B cell (primary cell): ENCODE measurements at regions of chr1 and their contacts with region 1.

Region 1: GRCh38 chr1:207321079-207321789 is at the start of gene CD55:
- DNase-seq: peak; percentile 100
- ATAC-seq: peak; percentile 86
- H3K4me3 ChIP-seq: peak within 1 kb of the TSS; percentile 83 to 100 (median 91)
- H3K4me3 Mint-ChIP-seq: peak within 1 kb of the TSS; percentile 98
- H3K27ac ChIP-seq: peak within 1 kb of the TSS; percentile 98
- H3K27ac Mint-ChIP-seq: peak within 1 kb of the TSS; percentile 100
- H3K4me1 ChIP-seq: peaks cover 38 to 43% of the 10 kb centered on the region in 2 donors
- H3K4me1 Mint-ChIP-seq: peaks cover 56% of the 10 kb centered on the region
- H3K27me3 ChIP-seq: no peaks in the 10 kb centered on the region
- H3K27me3 Mint-ChIP-seq: no peaks in the 10 kb centered on the region
- CTCF ChIP-seq: peak; percentile 43
- total RNA-seq, gene CD55: 239 and 252 TPM in 2 replicates

Region 2: DNA sequence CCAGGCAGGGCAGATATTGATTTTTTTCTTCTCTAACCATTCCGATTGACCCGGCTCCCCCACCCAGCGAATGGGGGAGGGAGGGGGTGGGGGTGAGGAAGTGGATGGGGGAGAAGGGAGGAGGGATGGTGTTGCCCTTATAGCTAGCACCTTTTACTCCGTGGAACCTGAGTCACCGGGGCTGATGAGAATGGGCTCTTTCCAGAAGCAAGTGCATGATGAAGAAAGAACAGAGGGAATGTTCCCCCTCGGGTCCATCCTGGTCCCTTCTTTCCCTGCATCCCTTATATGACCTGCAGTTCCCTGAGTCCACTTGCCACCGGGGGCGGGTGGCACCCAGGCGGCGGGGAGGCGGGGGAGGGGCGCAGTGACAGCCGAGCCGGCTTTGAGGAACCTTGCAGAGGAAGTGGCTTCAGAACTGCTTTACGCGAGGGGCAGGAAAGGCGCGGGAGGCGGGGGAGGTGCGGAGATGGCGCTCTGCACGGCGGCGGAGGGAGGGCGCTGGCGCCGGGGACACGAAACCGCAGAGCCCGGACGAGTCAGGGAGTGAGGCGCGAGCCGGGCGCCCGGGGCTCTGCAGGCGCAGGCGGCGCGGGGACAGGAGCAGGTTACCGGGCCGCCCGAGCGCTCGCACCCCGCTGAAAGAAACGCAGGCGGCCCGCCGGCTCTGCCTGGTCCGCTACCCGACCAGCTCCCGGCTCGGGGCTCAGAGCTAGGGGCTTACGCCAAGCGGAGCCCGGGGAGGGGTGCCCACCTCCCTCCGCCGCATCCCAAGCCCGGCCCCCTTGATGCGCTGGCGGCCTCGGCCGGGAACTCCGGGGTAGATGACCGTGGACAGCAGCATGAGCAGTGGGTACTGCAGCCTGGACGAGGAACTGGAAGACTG is 764.2 kb before region 1 on chr1:
- CTCF ChIA-PET with region 1: no interaction called
- POLR2A ChIA-PET with region 1: no interaction called
- intact Hi-C with region 1: loop called (anchors 10 kb)
- DNase-seq: peak; percentile 89
- ATAC-seq: peak; percentile 79
- H3K4me3 ChIP-seq: peak overlapping the region; percentile 85 to 100 (median 97)
- H3K4me3 Mint-ChIP-seq: peak overlapping the region; percentile 99
- H3K27ac ChIP-seq: peak overlapping the region; percentile 86 to 95
- H3K27ac Mint-ChIP-seq: peak overlapping the region; percentile 99
- H3K4me1 ChIP-seq: peaks cover 46 to 69% of the 10 kb centered on the region in 2 donors
- H3K4me1 Mint-ChIP-seq: peaks cover 67% of the 10 kb centered on the region
- H3K27me3 ChIP-seq: no peaks in the 10 kb centered on the region
- H3K27me3 Mint-ChIP-seq: no peaks in the 10 kb centered on the region
- CTCF ChIP-seq: no peak

Region 3: DNA sequence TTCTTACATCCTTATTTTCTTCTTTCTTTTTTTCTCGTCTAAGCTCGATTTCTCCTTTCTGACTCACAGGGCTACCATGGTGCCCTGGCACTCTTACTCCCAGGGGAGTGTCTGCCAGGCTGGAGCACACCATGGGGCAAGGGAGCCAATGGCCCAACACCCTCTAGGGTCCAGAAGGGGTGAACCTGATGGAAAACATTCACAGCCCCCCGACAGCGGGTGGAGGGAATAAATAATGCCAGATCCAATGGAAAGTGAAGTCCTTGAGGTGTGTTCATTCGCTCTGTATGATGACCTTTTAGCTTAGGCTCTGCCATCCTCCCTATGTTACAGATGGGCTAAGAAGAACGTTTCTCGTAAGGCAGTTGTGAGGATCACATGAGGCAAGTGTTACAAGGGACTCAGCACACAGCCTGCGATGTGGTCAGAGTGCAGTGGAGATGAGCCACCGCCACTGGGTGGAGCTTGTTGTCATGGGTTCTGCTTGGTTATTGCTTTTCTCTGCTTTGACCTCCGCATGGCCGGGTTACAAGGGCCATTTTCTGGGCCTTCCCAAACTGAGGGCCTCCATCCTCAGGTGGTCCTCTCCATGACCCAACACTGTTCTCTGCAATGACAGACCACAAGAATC is 396.0 kb before region 1 on chr1:
- CTCF ChIA-PET with region 1: no interaction called
- POLR2A ChIA-PET with region 1: interaction called, 3 read pairs
- intact Hi-C with region 1: loop called (anchors 5 kb)
- DNase-seq: peak; percentile 84
- ATAC-seq: peak; percentile 53
- H3K4me3 ChIP-seq: peak overlapping the region in 1 of 5 experiments; percentile 17
- H3K4me3 Mint-ChIP-seq: no peak overlapping the region
- H3K27ac ChIP-seq: peak overlapping the region; percentile 88 to 96
- H3K27ac Mint-ChIP-seq: no peak overlapping the region
- H3K4me1 ChIP-seq: peaks cover 82 to 84% of the 10 kb centered on the region in 2 donors
- H3K4me1 Mint-ChIP-seq: peaks cover 37% of the 10 kb centered on the region
- H3K27me3 ChIP-seq: no peaks in the 10 kb centered on the region
- H3K27me3 Mint-ChIP-seq: no peaks in the 10 kb centered on the region
- CTCF ChIP-seq: peak; percentile 19

Region 4: DNA sequence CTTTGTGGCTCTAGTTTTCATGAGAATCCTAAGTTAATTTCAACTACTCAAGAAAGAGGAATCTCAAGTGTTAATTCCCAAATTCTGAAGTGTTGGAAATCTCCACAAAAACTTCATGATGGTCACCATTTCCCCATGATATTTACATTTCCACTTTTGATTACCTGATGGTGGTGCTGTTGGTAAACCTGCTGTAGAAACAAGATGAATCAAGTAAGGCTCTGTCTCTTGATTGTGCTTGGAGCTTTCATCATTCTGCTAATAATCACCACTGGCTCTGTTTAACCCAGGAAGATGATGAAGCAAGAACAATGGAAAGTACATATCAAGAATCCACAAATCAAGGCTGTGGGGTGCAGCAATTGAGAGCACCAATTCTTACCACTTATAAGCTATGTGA is 139.4 kb before region 1 on chr1:
- CTCF ChIA-PET with region 1: interaction called, 9 read pairs
- POLR2A ChIA-PET with region 1: no interaction called
- intact Hi-C with region 1: loop called (anchors 1 kb)
- DNase-seq: peak; percentile 54
- ATAC-seq: no peak
- H3K4me3 ChIP-seq: no peak overlapping the region
- H3K4me3 Mint-ChIP-seq: no peak overlapping the region
- H3K27ac ChIP-seq: no peak overlapping the region
- H3K27ac Mint-ChIP-seq: no peak overlapping the region
- H3K4me1 ChIP-seq: no peaks in the 10 kb centered on the region
- H3K4me1 Mint-ChIP-seq: peaks cover 11% of the 10 kb centered on the region
- H3K27me3 ChIP-seq: no peaks in the 10 kb centered on the region
- H3K27me3 Mint-ChIP-seq: peaks cover 6% of the 10 kb centered on the region
- CTCF ChIP-seq: peak; percentile 43

Region 5: GRCh38 chr1:207298653-207299346 is 22.4 kb before region 1 on chr1:
- CTCF ChIA-PET with region 1: interaction called, 5 read pairs
- POLR2A ChIA-PET with region 1: interaction called, 13 read pairs
- intact Hi-C with region 1: no loop called
- DNase-seq: peak; percentile 22
- ATAC-seq: peak; percentile 28
- H3K4me3 ChIP-seq: peak overlapping the region in 2 of 5 experiments; percentile 27 to 31
- H3K4me3 Mint-ChIP-seq: peak overlapping the region; percentile 58
- H3K27ac ChIP-seq: peak overlapping the region; percentile 14 to 78
- H3K27ac Mint-ChIP-seq: peak overlapping the region; percentile 75
- H3K4me1 ChIP-seq: peaks cover 20 to 22% of the 10 kb centered on the region in 2 donors
- H3K4me1 Mint-ChIP-seq: peaks cover 26% of the 10 kb centered on the region
- H3K27me3 ChIP-seq: no peaks in the 10 kb centered on the region
- H3K27me3 Mint-ChIP-seq: no peaks in the 10 kb centered on the region
- CTCF ChIP-seq: no peak

Region 6: GRCh38 chr1:207336559-207337467 is 15.6 kb after region 1 on chr1:
- CTCF ChIA-PET with region 1: interaction called, 35 read pairs
- POLR2A ChIA-PET with region 1: interaction called, 23 read pairs
- intact Hi-C with region 1: loop called (anchors 1 kb)
- DNase-seq: peak; percentile 92
- ATAC-seq: peak; percentile 79
- H3K4me3 ChIP-seq: peak overlapping the region in 3 of 5 experiments; percentile 15 to 42 (median 27)
- H3K4me3 Mint-ChIP-seq: peak overlapping the region; percentile 72
- H3K27ac ChIP-seq: peak overlapping the region; percentile 95 to 98
- H3K27ac Mint-ChIP-seq: peak overlapping the region; percentile 94
- H3K4me1 ChIP-seq: peaks cover 52 to 74% of the 10 kb centered on the region in 2 donors
- H3K4me1 Mint-ChIP-seq: peaks cover 75% of the 10 kb centered on the region
- H3K27me3 ChIP-seq: no peaks in the 10 kb centered on the region
- H3K27me3 Mint-ChIP-seq: no peaks in the 10 kb centered on the region
- CTCF ChIP-seq: no peak

Region 7: GRCh38 chr1:207414606-207415108 is 93.4 kb after region 1 on chr1:
- CTCF ChIA-PET with region 1: interaction called, 3 read pairs
- POLR2A ChIA-PET with region 1: interaction called, 3 read pairs
- intact Hi-C with region 1: loop called (anchors 1 kb)
- DNase-seq: peak; percentile 84
- ATAC-seq: peak; percentile 90
- H3K4me3 ChIP-seq: peak overlapping the region in 4 of 5 experiments; percentile 28 to 39 (median 34)
- H3K4me3 Mint-ChIP-seq: peak overlapping the region; percentile 75
- H3K27ac ChIP-seq: peak overlapping the region; percentile 67 to 93
- H3K27ac Mint-ChIP-seq: peak overlapping the region; percentile 80
- H3K4me1 ChIP-seq: peaks cover 80 to 83% of the 10 kb centered on the region in 2 donors
- H3K4me1 Mint-ChIP-seq: peaks cover 77% of the 10 kb centered on the region
- H3K27me3 ChIP-seq: no peaks in the 10 kb centered on the region
- H3K27me3 Mint-ChIP-seq: no peaks in the 10 kb centered on the region
- CTCF ChIP-seq: no peak

Region 8: DNA sequence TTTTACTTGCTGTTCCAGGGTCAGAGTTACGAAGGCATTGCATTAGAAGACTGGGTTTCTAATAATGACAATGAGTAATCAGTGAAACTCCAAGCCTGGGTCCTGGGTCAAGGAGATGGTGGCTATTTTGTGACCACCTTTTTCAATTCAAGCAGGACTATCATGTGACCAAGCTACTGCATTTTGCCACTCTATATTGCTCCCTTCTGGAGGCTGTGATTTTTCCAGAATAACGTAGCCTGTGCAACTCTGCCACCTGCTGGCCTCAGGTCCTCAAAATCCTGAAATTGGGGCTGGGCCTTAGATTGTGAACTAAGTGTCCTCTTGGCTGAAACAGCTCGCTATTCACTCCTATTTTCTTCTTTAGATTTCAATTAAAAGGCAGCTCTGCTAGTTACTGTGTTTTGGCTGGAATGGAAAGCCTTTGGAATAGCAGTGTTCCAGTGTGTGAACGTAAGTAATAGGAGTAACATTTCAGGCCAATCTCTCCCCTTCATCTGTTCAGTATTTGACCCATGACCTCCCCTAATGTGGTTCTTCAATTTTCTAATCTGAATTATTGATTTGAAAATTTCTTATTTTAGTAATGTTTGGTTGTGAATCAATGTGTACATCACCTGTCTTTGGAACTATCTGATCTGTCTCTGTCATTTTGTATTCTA is 377.7 kb after region 1 on chr1:
- CTCF ChIA-PET with region 1: no interaction called
- POLR2A ChIA-PET with region 1: no interaction called
- intact Hi-C with region 1: no loop called
- DNase-seq: peak; percentile 38
- ATAC-seq: no peak
- H3K4me3 ChIP-seq: no peak overlapping the region
- H3K4me3 Mint-ChIP-seq: no peak overlapping the region
- H3K27ac ChIP-seq: no peak overlapping the region
- H3K27ac Mint-ChIP-seq: no peak overlapping the region
- H3K4me1 ChIP-seq: no peaks in the 10 kb centered on the region
- H3K4me1 Mint-ChIP-seq: no peaks in the 10 kb centered on the region
- H3K27me3 ChIP-seq: no peaks in the 10 kb centered on the region
- H3K27me3 Mint-ChIP-seq: no peaks in the 10 kb centered on the region
- CTCF ChIP-seq: peak; percentile 65